ENCODE measurements at regions of chr6 and their contacts with region 1.

Region 1: DNA sequence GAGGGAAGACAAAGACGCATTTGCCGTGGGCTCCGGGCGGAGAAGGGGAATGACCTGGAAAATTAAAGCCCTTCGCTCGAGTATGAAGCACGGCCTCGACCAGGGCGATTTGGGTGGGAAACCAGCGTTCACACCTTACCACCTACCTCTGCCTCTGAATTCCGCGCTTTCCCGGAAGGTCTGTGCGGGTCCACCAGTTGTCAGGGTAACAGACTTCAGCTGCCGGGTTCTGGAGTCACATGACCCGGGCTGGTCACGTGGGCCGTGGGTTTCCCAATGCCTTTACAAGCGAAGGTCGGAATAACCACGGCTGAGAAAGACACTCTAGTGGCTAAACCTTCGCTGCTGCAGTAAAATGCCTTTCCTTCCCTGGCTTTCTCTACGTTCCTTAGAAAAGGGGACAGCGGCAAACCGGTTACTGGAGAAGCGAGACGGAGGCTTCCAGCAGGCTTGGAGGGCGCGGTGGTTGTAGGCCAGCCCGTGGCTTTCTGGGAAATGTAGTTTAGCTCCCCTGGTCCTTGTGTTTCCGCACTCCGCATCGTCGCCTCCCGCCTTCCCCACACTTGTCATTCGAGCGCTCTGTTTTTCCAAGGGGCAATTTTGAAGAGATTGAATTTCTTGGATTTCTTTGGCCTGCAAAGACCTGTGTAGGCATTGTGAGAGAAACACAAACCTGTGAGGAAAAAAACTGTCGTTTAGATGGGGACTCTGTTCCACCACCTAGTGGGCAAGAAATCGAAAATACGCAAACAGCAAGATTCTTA is at the start of gene CEP162:
- DNase-seq: peak; percentile 93
- ATAC-seq: peak; percentile 96
- H3K4me3 Mint-ChIP-seq: peak within 1 kb of the TSS; percentile 84
- H3K27ac Mint-ChIP-seq: peak within 1 kb of the TSS; percentile 92
- H3K4me1 Mint-ChIP-seq: peaks cover 12% of the 10 kb centered on the region
- H3K27me3 Mint-ChIP-seq: peaks cover 5% of the 10 kb centered on the region
- total RNA-seq, gene CEP162: 7.2 to 7.3 TPM

Region 2: DNA sequence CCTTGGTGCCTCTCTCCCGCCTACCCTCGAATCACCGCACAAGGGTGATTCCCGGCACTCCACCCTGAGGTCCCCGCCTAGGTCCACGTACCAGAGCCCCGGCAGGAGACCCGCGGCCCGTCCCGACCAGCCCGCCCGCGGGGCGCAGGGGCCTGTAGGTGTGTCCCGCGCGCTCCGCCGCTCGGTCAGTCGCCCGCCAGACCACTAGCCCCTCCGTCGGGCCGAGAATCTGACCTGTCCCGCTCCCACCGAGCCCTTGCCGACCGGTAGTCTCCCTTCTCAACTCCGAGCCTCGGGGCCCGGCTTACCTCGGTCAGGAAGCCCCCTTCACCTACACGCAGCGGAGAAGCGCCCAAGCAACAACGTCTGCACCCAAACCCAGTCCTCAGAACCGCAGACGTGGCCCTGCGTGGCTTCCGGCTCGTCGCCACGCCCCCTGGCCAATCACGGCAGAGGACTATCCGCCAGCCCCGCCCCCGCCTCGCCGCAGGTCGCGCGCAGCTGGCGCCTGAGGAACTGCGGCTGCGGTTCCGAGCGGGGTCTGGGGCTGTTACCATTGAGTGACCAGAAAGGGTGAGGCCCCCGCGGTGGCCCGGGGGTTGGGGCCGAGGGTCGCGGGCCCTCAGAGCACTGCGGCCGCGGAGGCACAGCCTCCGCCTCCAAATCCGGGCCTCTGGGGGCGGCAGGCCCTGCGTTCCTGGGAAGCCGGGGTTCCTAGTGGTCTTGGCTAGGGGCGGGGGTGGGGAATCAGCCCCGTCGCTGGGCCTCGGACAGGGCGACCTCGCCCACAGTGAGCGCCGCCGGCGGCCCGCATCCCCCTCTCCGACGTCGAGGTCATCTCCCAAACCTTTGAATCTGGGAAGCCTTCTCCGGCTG is 1034.5 kb before region 1 on chr6 and contains the starts of genes PGM3 and RWDD2A:
- CTCF ChIA-PET with region 1: no interaction called
- POLR2A ChIA-PET with region 1: no interaction called
- intact Hi-C with region 1: loop called in 1 of 2 experiments (anchors 2 kb)
- DNase-seq: peak; percentile 93
- ATAC-seq: peak; percentile 99
- H3K4me3 Mint-ChIP-seq: peak within 1 kb of the TSS; percentile 95
- H3K27ac Mint-ChIP-seq: peak within 1 kb of the TSS; percentile 94
- H3K4me1 Mint-ChIP-seq: peaks cover 34% of the 10 kb centered on the region
- H3K27me3 Mint-ChIP-seq: no peaks in the 10 kb centered on the region
- total RNA-seq, gene PGM3: 12.6 to 19.6 TPM
- total RNA-seq, gene RWDD2A: 1.6 to 1.9 TPM

Region 3: GRCh38 chr6:83859410-83860358 is 367.9 kb before region 1 on chr6 and contains the start of gene CYB5R4:
- CTCF ChIA-PET with region 1: interaction called, 15 read pairs
- POLR2A ChIA-PET with region 1: no interaction called
- intact Hi-C with region 1: loop called (anchors 1 kb)
- DNase-seq: peak; percentile 96
- ATAC-seq: peak; percentile 98
- H3K4me3 Mint-ChIP-seq: peak within 1 kb of the TSS; percentile 97
- H3K27ac Mint-ChIP-seq: peak within 1 kb of the TSS; percentile 92
- H3K4me1 Mint-ChIP-seq: peaks cover 27% of the 10 kb centered on the region
- H3K27me3 Mint-ChIP-seq: peaks cover 11% of the 10 kb centered on the region
- total RNA-seq, gene CYB5R4: 21.9 to 28.2 TPM

Region 4: DNA sequence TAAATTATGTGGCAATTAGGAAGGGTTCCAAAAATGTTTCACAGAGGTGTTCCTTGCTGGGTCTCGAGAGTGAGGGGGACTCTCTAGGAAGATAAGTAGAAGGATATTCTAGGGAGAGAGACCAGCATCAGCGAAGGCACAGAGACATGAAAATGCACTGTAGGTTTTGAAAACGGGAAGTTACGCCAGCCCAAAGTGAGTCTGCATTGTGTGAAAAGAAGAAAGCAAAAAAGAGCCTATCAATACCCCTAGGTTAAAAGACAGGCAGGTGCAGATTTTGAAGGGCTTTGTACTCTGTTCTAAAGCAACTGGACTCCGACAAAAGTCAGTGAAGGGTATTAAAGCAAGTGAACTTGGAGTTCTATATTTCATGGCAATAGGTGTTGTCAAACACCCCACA is 219.7 kb before region 1 on chr6:
- CTCF ChIA-PET with region 1: no interaction called
- POLR2A ChIA-PET with region 1: no interaction called
- intact Hi-C with region 1: no loop called
- DNase-seq: no peak
- ATAC-seq: no peak
- H3K4me3 Mint-ChIP-seq: no peak overlapping the region
- H3K27ac Mint-ChIP-seq: no peak overlapping the region
- H3K4me1 Mint-ChIP-seq: no peaks in the 10 kb centered on the region
- H3K27me3 Mint-ChIP-seq: peaks cover 20% of the 10 kb centered on the region

Region 5: DNA sequence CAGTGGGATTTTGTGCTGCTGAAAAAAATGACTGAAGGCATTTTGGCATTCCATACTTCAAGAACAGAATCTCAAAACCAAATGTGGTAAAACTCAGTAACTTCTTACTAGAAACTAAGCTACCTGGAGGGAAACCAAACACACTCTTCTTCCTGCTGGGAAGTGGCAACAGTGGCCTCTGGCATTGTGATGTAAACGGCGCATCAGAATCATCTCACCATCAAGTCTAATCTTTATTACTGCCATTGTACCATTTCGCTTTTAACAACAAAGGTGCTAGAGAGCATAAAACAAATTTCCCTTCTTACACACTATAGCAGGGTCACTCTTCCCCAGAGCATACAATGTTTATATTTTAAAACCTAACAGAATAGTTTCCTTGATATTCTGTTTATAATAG is 101.5 kb after region 1 on chr6:
- CTCF ChIA-PET with region 1: no interaction called
- POLR2A ChIA-PET with region 1: no interaction called
- intact Hi-C with region 1: no loop called
- DNase-seq: no peak
- ATAC-seq: no peak
- H3K4me3 Mint-ChIP-seq: no peak overlapping the region
- H3K27ac Mint-ChIP-seq: no peak overlapping the region
- H3K4me1 Mint-ChIP-seq: no peaks in the 10 kb centered on the region
- H3K27me3 Mint-ChIP-seq: no peaks in the 10 kb centered on the region

Region 6: DNA sequence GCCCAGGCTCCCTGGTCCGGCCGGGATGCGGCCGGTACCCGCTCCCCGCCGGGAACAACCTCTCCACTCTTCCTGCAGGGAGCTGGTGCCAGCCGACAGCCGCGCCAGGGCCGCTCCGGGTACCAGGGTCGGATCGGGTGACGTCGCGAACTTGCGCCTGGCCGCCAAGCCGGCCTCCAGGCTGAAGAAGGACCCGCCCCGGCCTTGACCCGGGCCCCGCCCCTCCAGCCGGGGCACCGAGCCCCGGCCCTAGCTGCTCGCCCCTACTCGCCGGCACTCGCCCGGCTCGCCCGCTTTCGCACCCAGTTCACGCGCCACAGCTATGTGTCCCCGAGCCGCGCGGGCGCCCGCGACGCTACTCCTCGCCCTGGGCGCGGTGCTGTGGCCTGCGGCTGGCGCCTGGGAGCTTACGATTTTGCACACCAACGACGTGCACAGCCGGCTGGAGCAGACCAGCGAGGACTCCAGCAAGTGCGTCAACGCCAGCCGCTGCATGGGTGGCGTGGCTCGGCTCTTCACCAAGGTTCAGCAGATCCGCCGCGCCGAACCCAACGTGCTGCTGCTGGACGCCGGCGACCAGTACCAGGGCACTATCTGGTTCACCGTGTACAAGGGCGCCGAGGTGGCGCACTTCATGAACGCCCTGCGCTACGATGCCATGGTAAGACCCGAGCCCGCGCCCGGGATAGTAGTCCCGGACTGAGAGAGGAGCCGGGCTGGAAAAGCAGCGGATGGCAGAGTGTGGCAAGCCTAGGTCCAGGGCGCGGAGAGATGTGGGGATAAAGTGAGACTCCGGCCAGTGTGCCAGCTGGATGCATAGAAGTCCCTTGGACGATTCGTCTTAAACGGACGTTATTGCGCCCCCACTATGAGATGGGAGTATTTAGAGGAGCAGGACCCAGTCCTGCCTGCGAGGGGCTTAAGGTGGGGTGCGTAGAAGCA is 1222.5 kb after region 1 on chr6 and contains the start of gene NT5E:
- CTCF ChIA-PET with region 1: no interaction called
- POLR2A ChIA-PET with region 1: no interaction called
- intact Hi-C with region 1: loop called in 1 of 2 experiments (anchors 5 kb)
- DNase-seq: peak; percentile 74
- ATAC-seq: peak; percentile 72
- H3K4me3 Mint-ChIP-seq: peak within 1 kb of the TSS; percentile 81
- H3K27ac Mint-ChIP-seq: peak within 1 kb of the TSS; percentile 87
- H3K4me1 Mint-ChIP-seq: peaks cover 53% of the 10 kb centered on the region
- H3K27me3 Mint-ChIP-seq: peaks cover 49% of the 10 kb centered on the region
- total RNA-seq, gene NT5E: 3.8 to 4.9 TPM

Region 7: DNA sequence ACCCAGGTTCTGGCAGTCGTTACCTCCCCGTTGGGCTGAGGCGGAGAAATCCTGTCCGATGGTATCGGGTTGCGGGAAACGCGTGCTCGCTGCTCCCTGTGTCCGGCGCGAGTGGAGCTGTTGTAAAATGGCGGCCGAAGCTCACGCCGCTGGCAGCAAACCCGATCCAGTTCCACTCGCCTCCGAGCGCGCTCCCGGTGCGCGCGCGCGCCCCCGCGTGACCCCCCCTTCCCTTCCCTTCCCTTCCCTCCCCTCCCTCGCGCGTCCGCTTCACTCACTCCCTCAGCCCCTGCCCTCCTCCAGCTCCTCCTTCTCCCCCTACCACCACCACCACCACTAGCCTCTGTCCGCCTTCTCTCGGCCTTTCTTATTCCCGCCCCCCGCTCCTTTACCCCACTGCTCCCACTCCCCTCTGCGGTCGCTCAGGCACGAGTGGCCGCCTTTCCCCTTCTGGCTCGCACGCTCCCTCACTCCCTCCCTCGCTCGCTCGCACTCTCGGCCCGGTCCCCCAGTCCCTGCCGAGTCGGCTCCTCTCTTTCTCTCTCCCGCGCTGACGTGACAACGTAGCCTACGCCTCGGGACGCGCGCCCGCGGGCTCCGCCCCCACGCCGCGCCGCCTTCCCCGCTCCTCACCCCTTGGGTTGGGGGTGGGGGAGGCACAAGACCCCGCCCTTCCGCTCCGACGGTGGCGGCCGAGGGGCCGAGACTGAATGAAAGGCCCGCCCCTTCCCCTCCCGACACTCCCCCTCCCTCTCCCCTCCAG is 1415.3 kb after region 1 on chr6 and contains the start of gene SYNCRIP:
- CTCF ChIA-PET with region 1: no interaction called
- POLR2A ChIA-PET with region 1: no interaction called
- intact Hi-C with region 1: loop called in 1 of 2 experiments (anchors 2 kb)
- DNase-seq: peak; percentile 99
- ATAC-seq: peak; percentile 82
- H3K4me3 Mint-ChIP-seq: peak within 1 kb of the TSS; percentile 88
- H3K27ac Mint-ChIP-seq: peak within 1 kb of the TSS; percentile 99
- H3K4me1 Mint-ChIP-seq: peaks cover 45% of the 10 kb centered on the region
- H3K27me3 Mint-ChIP-seq: no peaks in the 10 kb centered on the region
- total RNA-seq, gene SYNCRIP: 156 to 191 TPM

Measured in activated CD4-positive, alpha-beta T cell treated with anti-CD3 and anti-CD28 coated beads for 36 hours (primary cell).